WTC11 (cell line): ENCODE measurements at regions of chr4 and their contacts with region 1.

Region 1: GRCh38 chr4:74189331-74190043 is 31.6 kb downstream of the MTHFD2L start:
- DNase-seq: no peak
- ATAC-seq: peak; percentile 64
- H3K4me3 Mint-ChIP-seq: no peak overlapping the region
- H3K27ac Mint-ChIP-seq: no peak overlapping the region
- H3K4me1 Mint-ChIP-seq: peaks cover 7% of the 10 kb centered on the region
- H3K27me3 Mint-ChIP-seq: no peaks in the 10 kb centered on the region
- CTCF ChIP-seq: peak; percentile 18; the same call in 1 of the 2 replicates

Region 2: DNA sequence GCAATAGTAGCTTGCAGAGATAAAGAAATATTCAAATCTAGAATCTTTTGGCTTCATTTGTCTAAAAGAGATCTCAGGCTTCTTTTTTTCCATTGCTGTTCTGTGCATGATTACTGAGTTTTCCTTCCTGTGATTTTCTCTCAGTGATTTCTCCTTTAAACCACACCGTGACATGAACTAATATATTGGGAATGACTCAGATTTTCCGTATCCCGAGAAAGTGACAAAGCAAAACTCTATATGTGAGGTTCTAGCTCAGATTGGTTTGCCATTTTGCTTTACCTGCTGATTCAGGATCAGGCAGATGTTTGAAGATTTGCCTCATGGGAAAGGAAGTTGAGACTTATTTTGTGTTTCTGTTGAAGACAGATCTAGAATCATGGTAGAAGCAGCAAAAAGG is 27.9 kb after region 1 on chr4:
- CTCF ChIA-PET with region 1: interaction called, 11 read pairs
- POLR2A ChIA-PET with region 1: no interaction called
- DNase-seq: no peak
- ATAC-seq: no peak
- H3K4me3 Mint-ChIP-seq: no peak overlapping the region
- H3K27ac Mint-ChIP-seq: no peak overlapping the region
- H3K4me1 Mint-ChIP-seq: peaks cover 33% of the 10 kb centered on the region
- H3K27me3 Mint-ChIP-seq: no peaks in the 10 kb centered on the region
- CTCF ChIP-seq: no peak

Region 3: GRCh38 chr4:74308215-74308614 is 118.7 kb after region 1 on chr4 and contains the start of gene EPGN:
- CTCF ChIA-PET with region 1: interaction called, 12 read pairs
- POLR2A ChIA-PET with region 1: no interaction called
- DNase-seq: no peak
- ATAC-seq: no peak
- H3K4me3 Mint-ChIP-seq: no peak within 1 kb of the TSS
- H3K27ac Mint-ChIP-seq: no peak within 1 kb of the TSS
- H3K4me1 Mint-ChIP-seq: no peaks in the 10 kb centered on the region
- H3K27me3 Mint-ChIP-seq: no peaks in the 10 kb centered on the region
- CTCF ChIP-seq: no peak
- total RNA-seq, gene EPGN: not detected in 3 replicates

Region 4: DNA sequence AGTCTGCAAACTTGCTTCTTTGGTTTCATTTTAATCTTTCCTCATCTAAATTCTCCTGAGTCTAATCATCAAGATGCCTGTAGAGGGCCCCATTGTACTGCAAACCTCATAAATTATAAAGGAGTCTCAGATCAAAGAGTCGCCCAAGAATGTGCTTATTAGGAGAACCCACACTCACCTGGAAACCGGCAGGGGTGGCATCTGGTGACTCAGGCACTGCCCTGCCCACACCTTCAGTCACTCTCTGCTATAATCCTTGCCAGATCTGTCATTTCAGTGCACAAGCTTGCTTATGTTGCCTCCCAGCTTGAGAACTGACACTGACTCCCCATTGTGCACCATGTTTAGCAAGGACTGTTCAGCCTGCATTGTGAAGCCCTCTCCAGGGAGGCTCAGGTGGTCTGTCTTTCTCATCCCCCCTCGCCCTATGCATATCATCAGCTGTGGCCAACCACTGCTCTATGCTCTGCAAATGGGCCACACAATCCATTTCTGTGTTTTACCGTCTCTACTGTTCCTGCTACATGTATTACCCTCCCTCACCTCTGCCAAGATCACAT is 131.2 kb after region 1 on chr4:
- CTCF ChIA-PET with region 1: interaction called, 11 read pairs
- POLR2A ChIA-PET with region 1: no interaction called
- DNase-seq: peak; percentile 52
- ATAC-seq: peak; percentile 95
- H3K4me3 Mint-ChIP-seq: no peak overlapping the region
- H3K27ac Mint-ChIP-seq: no peak overlapping the region
- H3K4me1 Mint-ChIP-seq: peaks cover 21% of the 10 kb centered on the region
- H3K27me3 Mint-ChIP-seq: no peaks in the 10 kb centered on the region
- CTCF ChIP-seq: peak; percentile 26; the same call in 1 of the 2 replicates

Region 5: GRCh38 chr4:74516321-74516720 is 326.8 kb after region 1 on chr4:
- CTCF ChIA-PET with region 1: no interaction called
- POLR2A ChIA-PET with region 1: no interaction called
- DNase-seq: no peak
- ATAC-seq: no peak
- H3K4me3 Mint-ChIP-seq: no peak overlapping the region
- H3K27ac Mint-ChIP-seq: no peak overlapping the region
- H3K4me1 Mint-ChIP-seq: no peaks in the 10 kb centered on the region
- H3K27me3 Mint-ChIP-seq: no peaks in the 10 kb centered on the region
- CTCF ChIP-seq: no peak